Naive thymus-derived CD4-positive, alpha-beta T cell (primary cell): ENCODE measurements at regions of chr1 and their contacts with region 1.

Region 1: GRCh38 chr1:40668769-40669525 is 3.5 kb upstream of the RIMS3 start:
- DNase-seq: peak; percentile 58 to 84 (median 73)
- ATAC-seq: peak; percentile 82
- H3K4me3 ChIP-seq: peak overlapping the region; percentile 35
- H3K4me3 Mint-ChIP-seq: peak overlapping the region in 8 of 10 donors; percentile 36 to 68 (median 54)
- H3K27ac ChIP-seq: no peak overlapping the region
- H3K27ac Mint-ChIP-seq: no peak overlapping the region
- H3K4me1 ChIP-seq: peaks cover 9 to 13% of the 10 kb centered on the region in 2 donors
- H3K4me1 Mint-ChIP-seq: peaks cover 8 to 22% (median 17%) of the 10 kb centered on the region in 7 donors
- H3K27me3 ChIP-seq: no peaks in the 10 kb centered on the region
- H3K27me3 Mint-ChIP-seq: peaks cover 0 to 16% (median 0%) of the 10 kb centered on the region in 5 donors

Region 2: DNA sequence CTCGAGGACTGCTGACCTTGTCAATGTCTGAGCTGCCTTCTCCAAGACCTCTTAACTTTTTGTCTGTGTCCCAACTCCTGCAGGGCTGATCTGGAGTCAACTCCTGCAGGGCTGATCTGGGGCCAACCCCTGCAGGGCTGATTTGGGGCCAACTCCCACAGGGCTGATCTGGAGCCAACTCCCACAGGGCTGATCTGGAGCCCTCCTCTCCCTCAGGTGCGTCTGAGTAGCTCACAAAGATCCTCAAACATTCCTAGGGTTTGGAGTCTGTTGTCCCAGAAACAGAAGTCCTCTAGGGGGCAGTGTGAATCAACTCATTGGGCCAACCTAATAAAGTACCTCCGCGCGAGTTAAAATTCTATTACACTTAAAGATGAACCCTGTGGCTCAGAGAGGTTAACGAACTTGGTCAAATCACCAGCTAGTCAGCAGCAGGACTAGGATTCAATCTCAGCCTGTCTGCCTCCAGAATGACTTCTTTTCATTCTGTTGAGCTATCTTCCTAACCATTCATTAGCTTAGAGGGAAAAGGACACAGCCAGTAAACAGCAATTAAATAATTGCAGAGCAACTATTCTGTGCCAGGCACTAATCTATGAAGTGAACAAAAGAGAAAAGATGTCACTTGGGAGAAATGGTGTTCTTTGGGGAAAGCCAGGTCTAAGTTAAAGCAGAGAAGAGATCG is 524.9 kb before region 1 on chr1:
- CTCF ChIA-PET with region 1: interaction called, 7 read pairs
- POLR2A ChIA-PET with region 1: no interaction called
- intact Hi-C with region 1: loop called in 1 of 2 experiments (anchors 1 kb)
- DNase-seq: peak; percentile 19 to 72 (median 57)
- ATAC-seq: peak; percentile 84
- H3K4me3 ChIP-seq: no peak overlapping the region
- H3K4me3 Mint-ChIP-seq: no peak overlapping the region
- H3K27ac ChIP-seq: no peak overlapping the region
- H3K27ac Mint-ChIP-seq: peak overlapping the region in 1 of 9 donors; percentile 5
- H3K4me1 ChIP-seq: no peaks in the 10 kb centered on the region
- H3K4me1 Mint-ChIP-seq: peaks cover 0 to 12% (median 0%) of the 10 kb centered on the region in 7 donors
- H3K27me3 ChIP-seq: no peaks in the 10 kb centered on the region
- H3K27me3 Mint-ChIP-seq: peaks cover 5 to 61% (median 17%) of the 10 kb centered on the region in 5 donors

Region 3: GRCh38 chr1:40625066-40625465 is 43.9 kb before region 1 on chr1:
- CTCF ChIA-PET with region 1: no interaction called
- POLR2A ChIA-PET with region 1: no interaction called
- intact Hi-C with region 1: loop called (anchors 1 to 5 kb)
- DNase-seq: peak in 3 of 9 donors; percentile 10 to 27 (median 18)
- ATAC-seq: peak; percentile 53
- H3K4me3 ChIP-seq: no peak overlapping the region
- H3K4me3 Mint-ChIP-seq: no peak overlapping the region
- H3K27ac ChIP-seq: no peak overlapping the region
- H3K27ac Mint-ChIP-seq: no peak overlapping the region
- H3K4me1 ChIP-seq: peaks cover 0 to 14% of the 10 kb centered on the region in 2 donors
- H3K4me1 Mint-ChIP-seq: peaks cover 0 to 20% (median 9%) of the 10 kb centered on the region in 7 donors
- H3K27me3 ChIP-seq: no peaks in the 10 kb centered on the region
- H3K27me3 Mint-ChIP-seq: peaks cover 0 to 4% (median 3%) of the 10 kb centered on the region in 5 donors

Region 4: DNA sequence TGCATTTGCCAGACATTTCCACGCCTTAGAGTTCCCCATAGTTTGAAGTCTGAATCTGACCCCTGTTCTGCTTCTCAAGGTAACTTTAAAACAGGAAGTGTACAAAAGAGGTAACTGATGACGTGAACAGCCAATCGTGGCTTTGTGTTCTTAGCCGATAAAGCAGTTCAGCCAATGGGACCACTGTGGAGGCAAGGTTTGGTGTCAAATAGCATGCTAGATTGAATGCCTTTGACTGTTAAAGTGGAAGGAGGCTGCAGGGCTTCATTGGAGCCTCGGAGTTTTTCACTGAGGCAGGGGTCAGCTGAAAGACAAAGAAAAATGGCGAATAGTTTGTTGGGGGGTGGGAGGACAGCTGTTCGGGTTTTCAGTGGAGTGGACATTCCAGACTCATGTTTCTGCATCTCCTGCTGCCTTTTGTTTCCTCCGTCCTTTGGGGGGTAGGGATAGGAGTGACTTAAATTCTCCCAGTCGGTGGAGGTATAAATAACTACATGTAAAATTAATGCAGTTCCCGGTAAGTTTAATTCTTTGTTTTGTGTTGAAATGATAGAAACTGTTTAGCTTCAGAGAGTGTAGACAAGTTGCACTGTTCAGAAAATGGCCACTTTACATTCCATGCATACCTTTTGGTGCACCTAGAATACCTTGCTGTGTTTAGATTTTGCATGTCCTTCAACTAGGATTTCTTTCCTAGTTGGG is 40.3 kb after region 1 on chr1:
- CTCF ChIA-PET with region 1: no interaction called
- POLR2A ChIA-PET with region 1: no interaction called
- intact Hi-C with region 1: loop called (anchors 1 to 2 kb)
- DNase-seq: peak; percentile 28 to 91 (median 88)
- ATAC-seq: peak; percentile 97
- H3K4me3 ChIP-seq: peak overlapping the region; percentile 68
- H3K4me3 Mint-ChIP-seq: peak overlapping the region; percentile 90 to 99 (median 94)
- H3K27ac ChIP-seq: peak overlapping the region; percentile 82
- H3K27ac Mint-ChIP-seq: peak overlapping the region; percentile 89 to 98 (median 93)
- H3K4me1 ChIP-seq: peaks cover 41 to 53% of the 10 kb centered on the region in 2 donors
- H3K4me1 Mint-ChIP-seq: peaks cover 40 to 78% (median 71%) of the 10 kb centered on the region in 7 donors
- H3K27me3 ChIP-seq: no peaks in the 10 kb centered on the region
- H3K27me3 Mint-ChIP-seq: no peaks in the 10 kb centered on the region